Motor neuron (in vitro differentiated cells): ENCODE measurements at regions of chr6 and their contacts with region 1.

Region 1: DNA sequence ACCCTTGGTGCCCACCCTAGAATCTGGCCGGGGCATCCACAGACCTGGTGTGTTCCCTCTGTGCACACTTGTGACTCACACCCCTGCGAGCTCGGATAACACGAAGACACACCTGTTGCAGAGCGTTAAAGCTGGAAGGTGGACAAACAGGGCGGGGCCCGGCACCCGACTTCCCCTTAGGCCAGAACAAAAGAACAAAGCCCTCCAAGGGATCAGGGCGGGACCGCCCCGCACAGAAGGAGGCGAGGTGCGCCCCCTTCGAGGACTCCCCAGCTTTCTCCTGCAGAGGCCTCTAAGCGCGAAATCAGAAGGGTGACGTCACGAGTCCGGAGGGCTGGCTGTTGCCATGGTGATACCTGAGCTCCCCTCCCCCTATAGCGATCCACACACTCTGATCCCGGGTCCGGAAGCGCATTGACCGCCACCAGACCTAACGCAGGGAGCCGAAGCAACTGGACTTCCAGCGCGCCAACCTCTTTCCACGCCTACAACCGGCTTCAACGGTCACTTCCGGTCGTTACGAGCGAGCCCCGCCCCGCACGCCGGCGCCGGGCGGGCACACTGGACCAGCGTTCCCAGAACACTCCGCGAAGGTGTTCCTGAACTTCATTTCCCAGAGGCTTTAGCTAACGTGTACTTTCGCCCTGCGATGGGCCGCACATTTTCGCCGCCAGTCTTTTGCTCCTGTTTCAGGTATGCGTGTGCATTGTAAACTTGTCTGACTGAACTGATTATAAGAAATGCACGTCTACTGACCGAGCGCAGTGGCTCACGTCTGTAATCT is at the start of gene ZNF184:
- ATAC-seq: peak; percentile 90 to 97 (median 95)
- H3K4me3 ChIP-seq: peak within 1 kb of the TSS; percentile 58 to 88 (median 72)
- H3K27ac ChIP-seq: peak within 1 kb of the TSS; percentile 81 to 86
- H3K4me1 ChIP-seq: peaks cover 0 to 8% of the 10 kb centered on the region in 2 donors
- total RNA-seq, gene ZNF184: 5.0 to 17.7 (median 13.7) TPM

Region 2: DNA sequence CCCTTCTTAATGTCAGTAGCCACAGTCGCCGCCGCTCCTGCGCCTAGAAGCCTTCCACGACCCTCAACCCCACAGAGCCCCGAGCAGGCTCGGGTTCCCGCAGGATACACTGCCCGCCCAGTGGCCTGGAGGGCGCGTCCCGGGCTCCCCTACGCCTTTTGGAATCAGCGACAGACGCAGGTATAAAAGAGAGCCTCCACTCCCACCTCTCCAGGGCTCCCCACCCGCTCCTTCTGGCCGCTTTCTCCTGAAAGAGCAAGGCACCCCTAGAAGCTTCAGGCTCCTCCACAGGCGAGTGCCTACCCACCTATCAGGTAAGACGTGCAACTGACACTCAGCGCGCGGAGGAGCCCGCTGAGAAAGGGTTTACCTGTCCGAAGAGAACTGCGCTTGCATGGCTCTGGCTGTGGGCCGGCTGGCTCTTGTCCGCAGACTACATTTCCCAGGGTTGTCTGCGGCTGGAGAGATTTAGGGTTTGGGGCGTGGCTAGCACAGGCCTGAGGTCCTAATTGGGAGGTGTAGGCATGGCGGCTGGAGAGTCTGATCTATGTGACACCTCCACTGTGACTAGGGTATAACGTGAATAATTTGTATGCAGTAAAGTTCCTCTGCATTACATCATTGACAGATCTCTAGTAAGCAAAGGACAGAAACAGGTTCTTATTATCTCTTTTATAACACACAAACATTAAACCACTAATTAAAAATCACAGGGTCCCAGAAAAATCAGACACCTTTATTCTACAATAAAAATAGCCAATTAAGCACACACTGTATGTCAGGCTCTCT is 97.8 kb before region 1 on chr6:
- in situ Hi-C with region 1: loop called in 1 of 9 experiments (anchors 25 kb)
- ATAC-seq: peak; percentile 44 to 100 (median 99)
- H3K4me3 ChIP-seq: peak overlapping the region; percentile 44 to 71 (median 57)
- H3K27ac ChIP-seq: no peak overlapping the region
- H3K4me1 ChIP-seq: peaks cover 4 to 5% of the 10 kb centered on the region in 2 donors